ENCODE measurements at regions of chr19 and their contacts with region 1.

Region 1: DNA sequence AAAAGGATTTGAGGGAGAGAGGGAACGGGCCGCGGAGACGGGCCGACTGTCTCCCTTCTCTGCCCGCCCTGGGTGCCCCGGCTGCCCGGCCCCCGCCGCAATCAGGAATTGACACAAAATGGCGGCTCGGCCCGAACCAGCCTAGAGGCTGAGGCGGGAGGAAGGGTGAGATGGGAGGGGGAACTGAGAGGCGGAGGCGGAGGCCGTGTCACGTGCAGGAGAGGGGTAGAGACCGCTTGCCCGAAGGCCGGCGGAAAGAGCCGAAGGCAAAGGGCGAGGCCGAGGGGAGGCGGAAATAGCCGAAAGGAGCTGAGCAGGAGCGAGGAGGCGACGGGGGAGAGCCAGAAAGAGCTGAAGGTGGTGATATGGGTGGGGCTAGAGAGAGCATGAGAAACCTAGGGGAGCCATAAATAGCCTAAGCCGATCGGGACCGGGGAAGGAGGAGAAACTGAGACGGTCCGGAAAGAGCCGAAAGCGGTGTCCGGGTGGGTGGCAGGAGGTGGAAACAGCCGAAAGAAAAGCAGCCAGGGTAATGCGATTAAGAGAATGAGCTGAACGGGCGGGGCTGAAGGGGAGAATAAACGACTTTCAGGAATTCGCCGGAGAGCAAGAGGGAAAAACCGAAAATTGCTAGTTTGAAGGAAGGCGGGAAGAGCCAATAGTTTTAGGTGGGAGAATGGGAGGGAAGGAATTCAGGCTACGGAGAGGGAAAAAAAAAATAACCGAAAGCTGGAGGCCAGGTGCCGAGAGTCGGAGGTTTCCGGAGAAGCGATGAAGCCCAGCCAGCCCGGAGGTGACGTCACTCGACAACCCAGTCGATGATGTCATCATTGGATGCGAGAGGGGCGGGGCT is at the start of gene ZC3H4:
- DNase-seq: peak; percentile 100
- H3K4me3 ChIP-seq: peak within 1 kb of the TSS; percentile 90 to 95
- H3K4me3 Mint-ChIP-seq: peak within 1 kb of the TSS; percentile 97 to 100 (median 98)
- H3K27ac ChIP-seq: peak within 1 kb of the TSS; percentile 98
- H3K27ac Mint-ChIP-seq: peak within 1 kb of the TSS; percentile 99 to 100 (median 100)
- H3K4me1 ChIP-seq: peaks cover 28% of the 10 kb centered on the region
- H3K4me1 Mint-ChIP-seq: peaks cover 17 to 46% (median 28%) of the 10 kb centered on the region in 4 donors
- H3K27me3 ChIP-seq: no peaks in the 10 kb centered on the region
- H3K27me3 Mint-ChIP-seq: no peaks in the 10 kb centered on the region
- total RNA-seq, gene ZC3H4: 74.8 to 75.7 TPM

Region 2: DNA sequence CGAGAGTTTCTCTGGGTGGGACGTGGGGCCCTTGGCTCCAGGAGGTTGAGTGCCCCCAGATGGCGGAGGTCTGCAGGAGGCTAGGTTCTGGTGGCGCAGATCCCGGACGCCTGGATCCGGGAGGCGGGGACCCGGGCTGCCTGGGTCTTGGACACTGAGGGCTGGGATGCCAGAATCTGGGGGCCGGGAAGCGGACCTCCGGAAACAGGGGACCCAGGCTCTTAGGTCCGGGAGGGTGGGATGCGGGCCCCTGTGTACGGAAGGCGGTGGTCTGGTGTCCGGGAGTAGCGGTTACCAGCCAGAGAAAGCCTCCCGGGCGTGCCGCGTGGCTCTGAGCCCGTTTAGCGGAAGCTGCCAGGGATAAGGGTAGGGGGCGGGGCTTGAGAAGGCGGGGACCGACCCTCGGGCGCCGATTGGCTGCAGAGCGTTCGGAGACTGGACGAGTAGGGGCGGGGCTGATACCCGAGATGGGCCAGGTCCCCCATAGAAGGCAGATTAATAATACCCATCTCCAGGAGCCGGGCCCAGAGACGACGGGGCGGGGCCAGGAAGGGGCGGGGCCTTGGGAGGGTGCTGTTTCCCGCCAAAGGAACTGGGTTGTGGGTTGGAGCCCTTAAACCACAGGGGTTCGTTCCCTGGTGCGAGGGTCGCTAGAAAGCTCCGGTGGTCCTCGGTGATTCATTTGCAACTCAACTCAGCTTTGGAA is 324.8 kb before region 1 on chr19 and contains the start of gene SLC1A5:
- CTCF ChIA-PET with region 1: no interaction called
- POLR2A ChIA-PET with region 1: interaction called, 3 read pairs
- intact Hi-C with region 1: loop called (anchors 2 kb)
- DNase-seq: peak; percentile 95 to 97 (median 95)
- H3K4me3 ChIP-seq: peak within 1 kb of the TSS; percentile 78 to 90
- H3K4me3 Mint-ChIP-seq: peak within 1 kb of the TSS; percentile 89 to 97 (median 92)
- H3K27ac ChIP-seq: peak within 1 kb of the TSS; percentile 75
- H3K27ac Mint-ChIP-seq: peak within 1 kb of the TSS; percentile 80 to 99 (median 90)
- H3K4me1 ChIP-seq: peaks cover 61% of the 10 kb centered on the region
- H3K4me1 Mint-ChIP-seq: peaks cover 42 to 78% (median 56%) of the 10 kb centered on the region in 4 donors
- H3K27me3 ChIP-seq: no peaks in the 10 kb centered on the region
- H3K27me3 Mint-ChIP-seq: no peaks in the 10 kb centered on the region
- total RNA-seq, gene SLC1A5: 20.3 TPM

Region 3: DNA sequence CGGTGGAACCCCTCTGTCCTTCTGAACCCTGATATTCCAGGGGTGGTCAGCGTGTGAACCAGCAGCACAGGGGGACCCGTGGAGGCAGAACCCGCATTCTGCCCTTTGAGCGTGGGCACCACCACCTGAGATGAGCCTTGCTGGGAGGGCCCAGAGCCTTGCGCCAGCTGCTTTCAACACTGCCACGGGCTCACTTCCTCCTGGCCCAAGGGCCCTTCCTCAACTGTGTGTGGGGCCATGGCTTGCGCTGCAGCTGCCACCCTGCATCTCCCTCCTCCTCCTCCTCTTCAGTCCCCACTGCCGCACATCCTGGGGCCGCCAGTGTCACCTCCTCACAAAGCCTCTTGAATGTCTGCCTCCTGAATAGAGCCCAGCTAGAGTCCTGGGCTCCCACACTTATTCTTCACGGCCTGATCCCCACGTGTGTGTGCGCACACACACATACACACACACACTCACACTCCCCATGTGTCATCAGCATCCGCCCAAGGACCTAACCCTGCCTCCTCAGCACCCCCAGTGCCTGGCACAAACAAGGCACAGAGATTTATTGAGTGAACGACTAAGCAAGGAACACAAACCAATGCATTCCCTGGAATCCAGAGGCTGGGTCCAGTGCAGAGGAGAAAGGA is 37.9 kb before region 1 on chr19:
- CTCF ChIA-PET with region 1: interaction called, 83 read pairs
- POLR2A ChIA-PET with region 1: interaction called, 109 read pairs
- intact Hi-C with region 1: loop called (anchors 5 kb)
- DNase-seq: no peak
- H3K4me3 ChIP-seq: no peak overlapping the region
- H3K4me3 Mint-ChIP-seq: no peak overlapping the region
- H3K27ac ChIP-seq: no peak overlapping the region
- H3K27ac Mint-ChIP-seq: peak overlapping the region in 4 of 7 donors; percentile 57 to 86 (median 82)
- H3K4me1 ChIP-seq: no peaks in the 10 kb centered on the region
- H3K4me1 Mint-ChIP-seq: peaks cover 0 to 9% (median 5%) of the 10 kb centered on the region in 4 donors
- H3K27me3 ChIP-seq: no peaks in the 10 kb centered on the region
- H3K27me3 Mint-ChIP-seq: no peaks in the 10 kb centered on the region

Region 4: GRCh38 chr19:47124937-47125668 is 11.9 kb after region 1 on chr19:
- CTCF ChIA-PET with region 1: interaction called, 14 read pairs
- POLR2A ChIA-PET with region 1: interaction called, 48 read pairs
- intact Hi-C with region 1: loop called (anchors 2 kb)
- DNase-seq: peak in 4 of 5 donors; percentile 54 to 63 (median 60)
- H3K4me3 ChIP-seq: no peak overlapping the region
- H3K4me3 Mint-ChIP-seq: no peak overlapping the region
- H3K27ac ChIP-seq: no peak overlapping the region
- H3K27ac Mint-ChIP-seq: peak overlapping the region in 4 of 7 donors; percentile 30 to 77 (median 42)
- H3K4me1 ChIP-seq: no peaks in the 10 kb centered on the region
- H3K4me1 Mint-ChIP-seq: peaks cover 3 to 6% (median 6%) of the 10 kb centered on the region in 4 donors
- H3K27me3 ChIP-seq: no peaks in the 10 kb centered on the region
- H3K27me3 Mint-ChIP-seq: no peaks in the 10 kb centered on the region

Region 5: GRCh38 chr19:47190167-47190727 is 77.0 kb after region 1 on chr19:
- CTCF ChIA-PET with region 1: no interaction called
- POLR2A ChIA-PET with region 1: interaction called, 13 read pairs
- intact Hi-C with region 1: no loop called
- DNase-seq: peak; percentile 60 to 78 (median 64)
- H3K4me3 ChIP-seq: no peak overlapping the region
- H3K4me3 Mint-ChIP-seq: peak overlapping the region in 7 of 8 donors; percentile 5 to 81 (median 56)
- H3K27ac ChIP-seq: peak overlapping the region; percentile 47
- H3K27ac Mint-ChIP-seq: peak overlapping the region; percentile 62 to 94 (median 85)
- H3K4me1 ChIP-seq: peaks cover 72% of the 10 kb centered on the region
- H3K4me1 Mint-ChIP-seq: peaks cover 40 to 71% (median 48%) of the 10 kb centered on the region in 4 donors
- H3K27me3 ChIP-seq: no peaks in the 10 kb centered on the region
- H3K27me3 Mint-ChIP-seq: no peaks in the 10 kb centered on the region

Region 6: DNA sequence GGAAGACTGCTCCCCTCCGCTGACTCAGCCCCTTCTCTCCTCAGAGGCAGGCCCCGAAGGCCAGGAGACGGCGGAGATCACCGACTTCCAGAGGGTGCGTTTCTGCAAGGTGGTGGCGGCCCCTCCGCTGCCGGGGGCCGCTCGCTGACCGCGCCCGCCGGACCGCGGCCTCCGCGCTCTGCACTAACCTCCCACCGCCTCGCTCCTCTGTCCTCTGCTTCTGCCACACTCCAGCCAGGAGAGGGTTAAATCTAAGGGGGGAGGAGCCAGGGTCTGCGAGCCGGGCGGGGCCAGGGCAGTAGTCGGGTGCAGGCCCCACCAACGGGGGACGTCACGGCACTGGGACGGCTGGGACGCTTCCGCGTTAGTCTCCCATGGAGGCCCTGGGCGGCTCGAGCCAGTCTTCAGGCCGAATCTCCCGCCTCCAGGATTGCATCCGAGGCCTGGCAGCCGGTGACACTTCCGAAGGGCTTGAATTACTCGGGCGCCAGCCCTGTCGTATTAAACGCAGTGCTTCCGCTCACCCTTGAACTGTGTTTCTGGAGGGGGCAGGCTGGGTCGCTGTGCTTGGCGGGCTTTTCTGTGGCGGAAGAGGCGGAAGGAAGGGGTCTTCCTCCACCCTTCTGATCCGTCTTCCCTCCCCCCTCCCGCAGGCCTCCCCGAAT is 160.2 kb after region 1 on chr19:
- CTCF ChIA-PET with region 1: interaction called, 3 read pairs
- POLR2A ChIA-PET with region 1: interaction called, 29 read pairs
- intact Hi-C with region 1: loop called (anchors 1 kb)
- DNase-seq: peak; percentile 87 to 92 (median 89)
- H3K4me3 ChIP-seq: peak overlapping the region; percentile 89 to 100
- H3K4me3 Mint-ChIP-seq: peak overlapping the region; percentile 92 to 99 (median 97)
- H3K27ac ChIP-seq: peak overlapping the region; percentile 96
- H3K27ac Mint-ChIP-seq: peak overlapping the region; percentile 97 to 99 (median 99)
- H3K4me1 ChIP-seq: peaks cover 19% of the 10 kb centered on the region
- H3K4me1 Mint-ChIP-seq: peaks cover 15 to 33% (median 19%) of the 10 kb centered on the region in 4 donors
- H3K27me3 ChIP-seq: no peaks in the 10 kb centered on the region
- H3K27me3 Mint-ChIP-seq: no peaks in the 10 kb centered on the region

Measured in CD4-positive, alpha-beta memory T cell (primary cell).